Cardiac septum (tissue), 1 donor: ENCODE measurements at regions of chr4 and their contacts with region 1.

Region 1: GRCh38 chr4:123555233-123555806 is 158.7 kb downstream of the SPRY1 start:
- DNase-seq: peak; percentile 85

Region 2: GRCh38 chr4:123408471-123409084 is 146.7 kb before region 1 on chr4:
- intact Hi-C with region 1: loop called (anchors 5 kb)
- DNase-seq: no peak

Region 3: GRCh38 chr4:123418351-123418931 is 136.9 kb before region 1 on chr4:
- intact Hi-C with region 1: loop called (anchors 5 kb)
- DNase-seq: no peak

Region 4: DNA sequence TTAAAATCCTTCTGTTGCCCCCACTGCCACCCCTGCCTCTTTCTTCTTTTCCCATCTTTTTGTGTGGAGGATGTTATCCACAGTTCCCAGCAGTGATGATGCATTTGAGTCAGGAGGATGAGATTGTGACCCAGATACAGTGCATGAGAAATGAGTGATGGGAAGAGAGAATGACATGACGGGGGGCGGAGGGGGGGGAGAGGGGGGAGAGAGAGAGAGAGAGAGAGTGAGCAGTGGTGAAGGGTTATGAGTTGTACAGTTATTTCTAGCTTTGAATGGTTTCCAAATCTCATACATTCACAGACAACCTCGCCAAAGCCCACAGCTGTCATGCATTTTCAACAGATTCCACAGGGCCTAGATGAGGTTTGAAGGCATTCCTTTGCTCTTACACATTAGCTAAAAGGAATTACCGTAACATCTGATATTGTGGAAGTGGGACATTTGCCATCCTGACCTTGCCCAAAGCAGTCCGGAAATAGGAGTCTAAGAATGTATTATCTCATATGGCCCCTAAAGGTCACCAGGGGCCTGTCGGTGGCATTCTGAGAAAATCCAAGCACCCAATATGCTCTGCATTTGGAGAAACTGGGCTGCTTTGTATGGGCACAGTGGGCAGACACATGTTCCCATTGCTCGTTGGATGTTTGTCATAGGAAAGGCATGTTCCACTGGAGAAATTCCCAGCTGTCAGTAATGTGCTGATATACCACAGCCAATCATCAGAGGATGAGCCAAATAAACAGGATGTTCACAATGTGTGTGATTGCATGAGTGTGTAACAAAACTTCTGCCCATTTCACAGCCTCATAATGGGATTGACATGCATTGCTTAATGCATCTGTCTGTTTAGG is 277.1 kb after region 1 on chr4:
- intact Hi-C with region 1: no loop called
- DNase-seq: peak; percentile 81

Region 5: GRCh38 chr4:123986268-123986798 is 431.0 kb after region 1 on chr4:
- intact Hi-C with region 1: loop called (anchors 10 kb)
- DNase-seq: no peak

Region 6: GRCh38 chr4:124030160-124030561 is 474.8 kb after region 1 on chr4:
- intact Hi-C with region 1: no loop called
- DNase-seq: no peak